HEK293 (cell line): ENCODE measurements at regions of chr9 and their contacts with region 1.

Region 1: GRCh38 chr9:34611829-34612630 is at the start of gene RPP25L:
- H3K4me3 ChIP-seq: peak within 1 kb of the TSS; percentile 76
- H3K27ac ChIP-seq: peak within 1 kb of the TSS; percentile 87
- H3K4me1 ChIP-seq: no peaks in the 10 kb centered on the region
- CTCF ChIP-seq: no peak

Region 2: GRCh38 chr9:34628656-34629491 is 16.8 kb after region 1 on chr9 and contains the start of gene ARID3C:
- CTCF ChIA-PET with region 1: interaction called, 164 read pairs
- POLR2A ChIA-PET with region 1: interaction called, 7 read pairs
- H3K4me3 ChIP-seq: peak within 1 kb of the TSS; percentile 35
- H3K27ac ChIP-seq: no peak within 1 kb of the TSS
- H3K4me1 ChIP-seq: no peaks in the 10 kb centered on the region; the same call in 1 of the 2 replicates
- CTCF ChIP-seq: no peak

Region 3: GRCh38 chr9:34869390-34869789 is 257.4 kb after region 1 on chr9:
- CTCF ChIA-PET with region 1: no interaction called
- POLR2A ChIA-PET with region 1: no interaction called
- H3K4me3 ChIP-seq: no peak overlapping the region
- H3K27ac ChIP-seq: no peak overlapping the region
- H3K4me1 ChIP-seq: no peaks in the 10 kb centered on the region
- CTCF ChIP-seq: 0 out of 2 replicates have a peak, but pooled peaks have one; percentile 24